Mammary epithelial cell (primary cell): ENCODE measurements at regions of chr13 and their contacts with region 1.

Region 1: GRCh38 chr13:40770934-40771618 is at the start of gene MRPS31:
- DNase-seq: peak; percentile 90
- H3K4me3 ChIP-seq: peak within 1 kb of the TSS; percentile 58 to 78 (median 74)
- H3K27ac ChIP-seq: peak within 1 kb of the TSS; percentile 73
- H3K4me1 ChIP-seq: peaks cover 7% of the 10 kb centered on the region
- H3K27me3 ChIP-seq: no peaks in the 10 kb centered on the region
- CTCF ChIP-seq: peak in 1 of 2 donors; percentile 2
- total RNA-seq, gene MRPS31: 15.7 to 17.3 TPM

Region 2: GRCh38 chr13:39765801-39766463 is 1005.1 kb before region 1 on chr13:
- CTCF ChIA-PET with region 1: no interaction called
- dilution Hi-C with region 1: no loop called
- in situ Hi-C with region 1: no loop called
- intact Hi-C with region 1: loop called (anchors 10 kb)
- DNase-seq: peak; percentile 46
- H3K4me3 ChIP-seq: no peak overlapping the region
- H3K27ac ChIP-seq: no peak overlapping the region
- H3K4me1 ChIP-seq: peaks cover 11% of the 10 kb centered on the region
- H3K27me3 ChIP-seq: no peaks in the 10 kb centered on the region
- CTCF ChIP-seq: peak; percentile 23 to 69

Region 3: DNA sequence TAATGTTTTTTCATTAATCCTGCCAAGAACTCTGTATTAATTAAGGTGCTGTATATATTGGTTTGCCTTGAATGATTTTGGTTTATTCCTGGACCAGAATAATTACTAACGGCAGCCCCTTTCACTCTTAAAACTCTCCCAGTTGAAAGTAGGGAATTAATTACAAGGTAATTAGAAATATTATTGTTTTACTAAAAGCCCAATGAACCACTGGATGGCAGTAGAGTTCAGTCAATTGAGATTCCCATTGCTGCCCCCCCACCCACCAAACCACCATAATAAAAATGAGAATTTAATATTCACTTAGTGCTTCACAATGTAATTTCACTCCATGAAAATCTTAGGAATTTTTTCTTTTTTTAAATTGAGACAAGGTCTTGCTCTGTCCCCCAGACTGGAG is 304.0 kb after region 1 on chr13:
- CTCF ChIA-PET with region 1: no interaction called
- dilution Hi-C with region 1: no loop called
- in situ Hi-C with region 1: no loop called
- intact Hi-C with region 1: no loop called
- DNase-seq: no peak
- H3K4me3 ChIP-seq: no peak overlapping the region
- H3K27ac ChIP-seq: no peak overlapping the region
- H3K4me1 ChIP-seq: no peaks in the 10 kb centered on the region
- H3K27me3 ChIP-seq: no peaks in the 10 kb centered on the region
- CTCF ChIP-seq: peak; percentile 38 to 52